ENCODE measurements at regions of chr20 and their contacts with region 1.

Region 1: GRCh38 chr20:53623454-53624211 is 30.0 kb upstream of the ZNF217 start:
- DNase-seq: peak; percentile 29
- H3K4me3 Mint-ChIP-seq: peak overlapping the region; percentile 74
- H3K27ac Mint-ChIP-seq: peak overlapping the region; percentile 94
- H3K4me1 Mint-ChIP-seq: peaks cover 37% of the 10 kb centered on the region
- H3K27me3 Mint-ChIP-seq: no peaks in the 10 kb centered on the region

Region 2: GRCh38 chr20:53570521-53571357 is 52.9 kb before region 1 on chr20:
- intact Hi-C with region 1: no loop called
- DNase-seq: no peak
- H3K4me3 Mint-ChIP-seq: no peak overlapping the region
- H3K27ac Mint-ChIP-seq: no peak overlapping the region
- H3K4me1 Mint-ChIP-seq: peaks cover 51% of the 10 kb centered on the region
- H3K27me3 Mint-ChIP-seq: no peaks in the 10 kb centered on the region

Region 3: DNA sequence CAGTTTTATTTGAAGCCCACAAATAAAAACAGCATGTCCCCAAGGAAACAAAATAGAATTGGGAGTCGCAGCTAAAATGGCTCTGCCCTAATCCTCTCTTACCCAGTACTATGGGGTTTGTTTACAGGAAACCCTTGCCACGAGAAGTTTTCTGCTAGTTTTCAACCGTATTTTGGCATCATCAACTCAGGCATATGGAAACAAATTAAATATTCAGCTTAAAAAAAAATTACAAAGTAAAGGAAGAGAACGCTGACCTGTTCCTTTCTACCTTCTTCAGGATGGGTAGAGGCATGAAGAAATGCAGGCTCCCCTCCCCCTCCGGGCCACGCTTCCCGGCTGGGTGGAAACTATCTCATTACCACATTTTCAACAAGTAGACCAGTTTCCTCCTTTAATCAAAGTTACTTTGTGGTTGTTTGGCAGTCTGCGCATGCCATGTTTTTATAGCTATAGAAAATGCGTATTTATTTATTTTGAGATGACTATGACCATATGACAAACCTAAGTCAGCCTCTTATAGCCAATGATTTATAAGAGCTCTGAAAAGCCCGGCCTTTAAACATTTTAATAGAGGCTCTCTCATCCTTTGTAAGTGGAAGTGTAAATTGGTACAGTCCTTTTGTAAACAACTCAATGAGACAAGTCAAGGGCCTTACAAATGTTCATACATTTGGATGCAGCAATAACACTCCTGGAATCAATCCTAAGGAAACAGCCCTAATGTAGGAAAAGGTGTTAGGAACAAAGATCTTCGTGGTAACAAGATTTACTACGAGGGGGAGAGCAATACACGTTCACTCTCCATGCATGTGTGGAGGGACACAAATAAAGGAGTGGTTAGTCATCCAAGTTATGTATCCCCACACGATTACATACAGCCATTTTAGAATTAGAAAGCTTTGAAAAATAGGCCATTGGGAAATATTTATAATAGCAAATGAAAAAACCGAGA is 13.9 kb before region 1 on chr20:
- intact Hi-C with region 1: loop called (anchors 1 kb)
- DNase-seq: peak; percentile 68
- H3K4me3 Mint-ChIP-seq: peak overlapping the region; percentile 85
- H3K27ac Mint-ChIP-seq: peak overlapping the region; percentile 94
- H3K4me1 Mint-ChIP-seq: peaks cover 30% of the 10 kb centered on the region
- H3K27me3 Mint-ChIP-seq: no peaks in the 10 kb centered on the region

Region 4: GRCh38 chr20:53643031-53643832 is 19.6 kb after region 1 on chr20:
- intact Hi-C with region 1: loop called (anchors 1 kb)
- DNase-seq: peak; percentile 66
- H3K4me3 Mint-ChIP-seq: peak overlapping the region; percentile 76
- H3K27ac Mint-ChIP-seq: peak overlapping the region; percentile 97
- H3K4me1 Mint-ChIP-seq: peaks cover 39% of the 10 kb centered on the region
- H3K27me3 Mint-ChIP-seq: no peaks in the 10 kb centered on the region

Region 5: GRCh38 chr20:53652090-53652858 is 28.6 kb after region 1 on chr20:
- intact Hi-C with region 1: loop called (anchors 2 kb)
- DNase-seq: no peak
- H3K4me3 Mint-ChIP-seq: peak overlapping the region; percentile 70
- H3K27ac Mint-ChIP-seq: peak overlapping the region; percentile 97
- H3K4me1 Mint-ChIP-seq: peaks cover 41% of the 10 kb centered on the region
- H3K27me3 Mint-ChIP-seq: no peaks in the 10 kb centered on the region

Measured in activated T-helper 1 cell treated with anti-CD3 and anti-CD28 coated beads, Interleukin-12 subunit alpha, Interleukin-12 subunit beta, Interleukin-2, Interleukin-4 antibody, amounts not matched to agents 30 ng/mL and 10 ng/mL and 1 ng/mL, durations not matched to agents 14 hours and 24 hours and 36 hours (primary cell).